Left lung (tissue), 14 donors: ENCODE measurements at regions of chr1 and their contacts with region 1.

Region 1: GRCh38 chr1:101309334-101310311 is 72.8 kb downstream of the S1PR1 start:
- DNase-seq: peak; percentile 64 to 83 (median 72)
- ATAC-seq: peak; percentile 96
- H3K4me3 ChIP-seq: peak overlapping the region; percentile 12 to 27
- H3K27ac ChIP-seq: no peak overlapping the region
- H3K4me1 ChIP-seq: peaks cover 8 to 16% of the 10 kb centered on the region in 2 donors
- H3K27me3 ChIP-seq: peaks cover 0 to 13% of the 10 kb centered on the region in 2 donors
- CTCF ChIP-seq: peak; percentile 72 to 84

Region 2: GRCh38 chr1:101238681-101239094 is 70.9 kb before region 1 on chr1:
- intact Hi-C with region 1: no loop called
- DNase-seq: peak; percentile 87 to 95 (median 90)
- ATAC-seq: peak; percentile 84
- H3K4me3 ChIP-seq: peak overlapping the region; percentile 48 to 64
- H3K27ac ChIP-seq: peak overlapping the region; percentile 65 to 88
- H3K4me1 ChIP-seq: peaks cover 5 to 7% of the 10 kb centered on the region in 2 donors
- H3K27me3 ChIP-seq: peaks cover 0 to 42% of the 10 kb centered on the region in 2 donors
- CTCF ChIP-seq: peak; percentile 93 to 95

Region 3: GRCh38 chr1:101357444-101357986 is 47.9 kb after region 1 on chr1:
- intact Hi-C with region 1: loop called in 1 of 2 experiments (anchors 10 kb)
- DNase-seq: peak in 2 of 4 donors; percentile 74 to 82
- ATAC-seq: peak; percentile 100
- H3K4me3 ChIP-seq: no peak overlapping the region
- H3K27ac ChIP-seq: no peak overlapping the region
- H3K4me1 ChIP-seq: no peaks in the 10 kb centered on the region
- H3K27me3 ChIP-seq: no peaks in the 10 kb centered on the region
- CTCF ChIP-seq: peak; percentile 78 to 89

Region 4: DNA sequence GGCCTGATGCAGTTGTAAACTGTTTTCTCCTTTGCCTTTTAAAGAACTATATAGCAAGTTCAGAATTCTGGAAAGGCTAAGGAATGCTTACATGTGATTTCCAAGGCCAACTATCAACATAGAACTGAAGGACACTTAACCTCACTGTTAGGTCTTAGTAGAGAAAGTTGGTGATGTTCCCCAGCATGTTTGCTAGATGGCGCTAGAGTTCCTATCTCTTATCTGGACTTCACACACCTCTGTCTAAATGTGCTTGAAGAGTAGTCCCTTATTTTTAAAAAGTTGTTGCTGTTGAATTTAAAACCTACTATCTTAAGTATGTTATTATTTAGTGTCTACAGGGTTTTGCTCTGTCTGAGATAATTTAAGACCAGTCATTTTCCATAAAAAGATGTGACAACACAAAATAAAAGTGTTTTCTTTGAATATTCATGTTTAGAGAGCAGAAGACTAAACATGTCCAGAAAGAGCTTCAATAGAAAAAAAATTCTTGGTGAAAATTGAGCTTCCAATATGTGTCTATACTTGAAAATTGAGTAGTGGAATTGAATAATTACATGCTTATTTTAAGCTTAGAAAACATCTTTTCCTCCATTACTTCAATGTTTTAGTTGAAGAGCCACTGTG is 164.5 kb after region 1 on chr1:
- intact Hi-C with region 1: no loop called
- DNase-seq: peak in 1 of 4 donors; percentile 35
- ATAC-seq: peak; percentile 97
- H3K4me3 ChIP-seq: no peak overlapping the region
- H3K27ac ChIP-seq: no peak overlapping the region
- H3K4me1 ChIP-seq: no peaks in the 10 kb centered on the region
- H3K27me3 ChIP-seq: no peaks in the 10 kb centered on the region
- CTCF ChIP-seq: peak in 1 of 2 donors; percentile 30